H1 (cell line): ENCODE measurements at regions of chr6 and their contacts with region 1.

Region 1: GRCh38 chr6:42970871-42971612 is 7.9 kb downstream of the PEX6 start:
- DNase-seq: no peak
- H3K4me3 ChIP-seq: no peak overlapping the region
- H3K27ac ChIP-seq: 0 out of 2 replicates have a peak overlapping the region, but pooled peaks have one; percentile 19
- H3K4me1 ChIP-seq: peaks cover 0 to 3% (median 0%) of the 10 kb centered on the region in 4 experiments; a peak in 2 of 7 replicates
- H3K27me3 ChIP-seq: no peaks in the 10 kb centered on the region
- CTCF ChIP-seq: no peak
- EP300 ChIP-seq: no peak
- POLR2A ChIP-seq: no peak
- RAD21 ChIP-seq: no peak

Region 2: DNA sequence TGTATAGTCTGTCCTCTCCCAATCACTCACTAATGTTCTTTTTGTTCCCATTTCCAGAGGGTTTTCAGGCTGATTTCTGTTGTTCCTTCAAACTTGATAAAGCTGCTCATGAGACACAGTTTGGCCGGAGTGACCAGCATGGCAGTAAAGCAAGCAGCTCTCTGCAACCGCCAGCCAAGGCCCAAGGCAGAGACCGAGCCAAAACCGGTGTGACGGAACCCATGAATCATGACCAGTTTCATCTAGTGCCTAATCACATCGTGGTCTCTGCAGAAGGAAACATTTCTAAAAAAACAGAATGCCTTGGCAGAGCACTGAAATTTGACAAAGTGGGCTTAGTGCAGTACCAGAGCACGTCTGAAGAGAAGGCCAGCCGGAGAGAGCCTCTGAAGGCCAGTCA is 106.4 kb before region 1 on chr6:
- CTCF ChIA-PET with region 1: no interaction called
- POLR2A ChIA-PET with region 1: no interaction called
- DNase-seq: no peak
- H3K4me3 ChIP-seq: no peak overlapping the region
- H3K27ac ChIP-seq: no peak overlapping the region
- H3K4me1 ChIP-seq: no peaks in the 10 kb centered on the region
- H3K27me3 ChIP-seq: no peaks in the 10 kb centered on the region
- CTCF ChIP-seq: no peak
- EP300 ChIP-seq: no peak
- POLR2A ChIP-seq: no peak
- RAD21 ChIP-seq: no peak

Region 3: DNA sequence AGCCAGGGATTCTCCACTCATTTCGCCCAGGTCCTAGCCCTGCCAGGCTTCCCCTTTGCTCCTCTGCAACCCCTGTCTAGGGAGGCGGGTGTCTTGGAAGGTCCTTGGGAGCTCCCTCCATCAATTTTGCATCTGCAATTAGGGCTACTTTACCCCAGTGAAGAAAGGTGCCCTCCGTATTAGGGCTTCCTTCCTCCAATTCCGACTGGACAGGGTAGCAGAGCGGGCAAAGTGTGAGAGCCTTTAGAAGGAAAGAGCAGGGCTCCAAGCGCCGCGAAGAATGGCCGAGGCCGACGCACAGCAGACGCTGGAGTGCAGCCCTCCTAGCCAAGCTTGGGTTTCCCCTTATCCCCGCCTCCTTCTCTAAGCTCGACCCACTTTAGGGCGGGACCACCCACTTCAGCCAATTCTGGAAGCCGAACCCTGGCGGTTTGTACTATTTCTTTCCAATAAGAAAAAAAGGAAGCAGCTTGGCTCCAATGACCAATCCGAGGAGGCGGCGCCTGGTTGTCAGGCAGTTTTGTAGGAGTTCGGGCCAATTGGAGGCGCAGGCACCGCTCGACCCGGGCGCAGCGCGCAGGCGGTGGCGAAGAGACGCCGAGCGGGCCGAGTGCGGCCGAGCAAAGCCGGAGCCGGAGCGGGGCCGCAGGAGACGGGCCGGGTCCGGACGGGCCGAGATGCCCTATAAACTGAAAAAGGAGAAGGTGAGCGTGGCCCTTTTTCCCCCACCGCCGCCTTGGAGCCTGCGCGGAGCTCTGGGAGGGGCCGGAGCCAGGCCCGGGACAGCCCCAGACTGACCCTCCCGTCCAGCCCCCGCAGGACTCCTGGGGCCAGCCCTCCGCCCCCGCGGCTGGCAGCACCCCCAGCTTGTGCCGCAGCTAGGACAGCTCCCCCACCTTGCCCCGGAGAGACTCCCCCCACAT is 13.2 kb after region 1 on chr6 and contains the start of gene PPP2R5D:
- CTCF ChIA-PET with region 1: interaction called, 33 read pairs
- POLR2A ChIA-PET with region 1: interaction called, 29 read pairs
- DNase-seq: peak; percentile 92 to 95
- H3K4me3 ChIP-seq: peak within 1 kb of the TSS; percentile 63 to 74 (median 70)
- H3K27ac ChIP-seq: peak within 1 kb of the TSS; percentile 73
- H3K4me1 ChIP-seq: peaks cover 3 to 10% (median 5%) of the 10 kb centered on the region in 4 experiments; a peak in 6 of 7 replicates
- H3K27me3 ChIP-seq: no peaks in the 10 kb centered on the region
- CTCF ChIP-seq: no peak
- EP300 ChIP-seq: no peak
- POLR2A ChIP-seq: peak; percentile 81 to 96
- RAD21 ChIP-seq: 0 out of 4 replicates have a peak, but pooled peaks of 1 of the 2 experiments have one; percentile 4
- total RNA-seq, gene PPP2R5D: 52.1 and 52.4 TPM in 2 replicates